WTC11 (cell line): ENCODE measurements at regions of chr22 and their contacts with region 1.

Region 1: DNA sequence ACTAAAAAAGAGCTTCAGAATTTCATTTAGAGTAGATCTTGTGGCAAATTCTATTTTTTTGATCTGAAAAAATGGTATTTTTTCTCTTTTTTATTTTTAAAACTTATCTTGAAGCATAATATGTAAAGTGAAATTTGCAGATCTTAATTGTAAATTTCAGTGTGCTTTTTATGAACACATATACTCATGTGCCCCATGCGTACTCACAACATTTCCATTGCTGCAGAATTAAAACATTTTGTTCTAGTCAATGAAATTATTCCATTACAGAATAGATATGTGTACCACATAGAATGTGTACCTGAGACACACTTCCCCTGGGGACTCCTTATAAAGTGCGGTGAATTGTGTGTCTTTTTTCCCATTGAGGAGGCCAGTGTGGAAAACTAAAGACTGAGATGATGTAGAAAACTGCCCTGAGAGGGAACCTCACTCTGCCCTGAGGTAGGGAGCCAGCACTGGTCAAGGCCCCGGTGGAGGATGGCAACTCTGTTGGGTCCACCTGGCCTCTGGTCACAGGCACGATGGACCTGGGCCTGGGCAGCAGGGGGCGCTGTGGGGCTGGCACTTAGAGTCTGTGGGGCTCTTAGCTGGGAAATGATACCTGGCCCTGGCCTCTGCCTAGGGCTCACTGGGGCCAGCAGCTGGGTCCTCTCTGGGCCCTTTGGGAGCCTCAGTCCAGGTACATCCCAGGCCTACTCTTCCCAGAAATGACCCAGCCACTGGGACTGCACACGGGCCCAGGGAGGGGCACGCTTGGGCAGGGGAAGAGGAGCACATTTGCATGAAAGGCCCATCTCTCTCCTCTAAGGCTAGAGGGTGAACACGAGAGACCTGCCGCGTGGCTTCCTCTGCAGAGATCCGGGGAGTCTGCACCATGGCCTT is 77.9 kb upstream of the TOP3B start:
- DNase-seq: peak; percentile 93
- ATAC-seq: peak; percentile 97
- H3K4me3 Mint-ChIP-seq: no peak overlapping the region
- H3K27ac Mint-ChIP-seq: no peak overlapping the region
- H3K4me1 Mint-ChIP-seq: peaks cover 9% of the 10 kb centered on the region
- H3K27me3 Mint-ChIP-seq: peaks cover 100% of the 10 kb centered on the region
- CTCF ChIP-seq: peak; percentile 94

Region 2: GRCh38 chr22:21982338-21982965 is 78.0 kb before region 1 on chr22 and contains the start of gene TOP3B:
- CTCF ChIA-PET with region 1: interaction called, 25 read pairs
- POLR2A ChIA-PET with region 1: no interaction called
- DNase-seq: peak; percentile 79
- ATAC-seq: peak; percentile 72
- H3K4me3 Mint-ChIP-seq: peak within 1 kb of the TSS; percentile 87
- H3K27ac Mint-ChIP-seq: peak within 1 kb of the TSS; percentile 76
- H3K4me1 Mint-ChIP-seq: peaks cover 8% of the 10 kb centered on the region
- H3K27me3 Mint-ChIP-seq: peaks cover 28% of the 10 kb centered on the region
- CTCF ChIP-seq: no peak
- total RNA-seq, gene TOP3B: 52.5 to 68.6 TPM (median 52.7 TPM) in 3 replicates

Region 3: GRCh38 chr22:22043296-22044078 is 17.0 kb before region 1 on chr22:
- CTCF ChIA-PET with region 1: interaction called, 29 read pairs
- POLR2A ChIA-PET with region 1: no interaction called
- DNase-seq: no peak
- ATAC-seq: peak; percentile 16; the same call in 1 of the 2 replicates
- H3K4me3 Mint-ChIP-seq: no peak overlapping the region
- H3K27ac Mint-ChIP-seq: no peak overlapping the region
- H3K4me1 Mint-ChIP-seq: no peaks in the 10 kb centered on the region
- H3K27me3 Mint-ChIP-seq: peaks cover 94% of the 10 kb centered on the region
- CTCF ChIP-seq: no peak

Region 4: DNA sequence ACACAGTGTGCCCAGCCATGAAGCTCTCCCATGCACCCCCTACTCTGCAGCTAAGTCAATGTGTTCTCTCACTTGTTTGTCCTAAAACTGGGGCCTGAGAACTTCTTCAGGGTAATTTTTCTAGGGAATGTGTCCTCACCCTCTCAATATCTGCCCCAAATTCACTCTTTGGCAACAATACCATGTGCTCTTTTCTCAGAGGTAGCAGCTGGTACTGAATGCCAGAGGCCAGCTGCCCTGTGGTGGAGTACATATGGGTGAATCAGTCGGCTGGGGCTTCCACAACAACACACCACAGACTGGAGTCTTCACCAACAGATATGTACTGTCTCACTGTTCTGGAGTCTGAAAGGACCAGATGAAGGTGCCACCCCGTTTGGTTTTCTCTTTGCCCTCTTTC is 19.8 kb after region 1 on chr22:
- CTCF ChIA-PET with region 1: interaction called, 10 read pairs
- POLR2A ChIA-PET with region 1: no interaction called
- DNase-seq: no peak
- ATAC-seq: no peak
- H3K4me3 Mint-ChIP-seq: no peak overlapping the region
- H3K27ac Mint-ChIP-seq: no peak overlapping the region
- H3K4me1 Mint-ChIP-seq: no peaks in the 10 kb centered on the region
- H3K27me3 Mint-ChIP-seq: peaks cover 100% of the 10 kb centered on the region
- CTCF ChIP-seq: no peak

Region 5: DNA sequence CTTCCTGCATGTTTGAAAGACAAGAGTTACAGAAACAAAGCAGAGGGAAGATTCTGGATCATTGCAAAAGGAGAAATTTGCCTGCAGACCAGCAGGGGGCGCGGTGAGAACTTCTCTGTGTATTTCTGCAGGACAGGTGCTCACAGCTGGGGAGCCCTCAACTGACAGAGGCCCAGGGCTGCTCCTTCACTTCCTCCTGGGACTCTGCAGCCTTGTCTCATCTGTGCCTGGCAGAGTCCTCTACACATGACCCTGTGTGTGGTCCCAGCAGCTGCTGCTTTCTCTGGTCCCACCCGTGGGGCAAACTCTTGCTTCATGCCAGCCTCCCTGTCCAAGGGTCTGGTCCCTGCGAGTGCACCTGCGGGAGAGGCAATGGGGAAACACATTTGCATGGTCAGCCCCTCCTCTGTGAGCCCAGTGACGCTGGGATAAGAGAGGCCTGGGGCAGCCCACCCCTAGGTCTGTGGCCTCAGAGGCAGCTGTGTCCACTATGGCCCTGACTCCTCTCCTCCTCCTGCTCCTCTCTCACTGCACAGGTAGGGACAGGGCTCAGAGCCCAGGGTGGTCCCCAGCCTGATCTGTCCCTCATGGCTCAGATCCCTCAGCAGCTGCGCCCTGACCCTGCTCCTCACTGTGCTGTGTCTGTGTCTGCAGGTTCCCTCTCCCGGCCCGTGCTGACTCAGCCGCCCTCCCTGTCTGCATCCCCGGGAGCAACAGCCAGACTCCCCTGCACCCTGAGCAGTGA is 140.9 kb after region 1 on chr22:
- CTCF ChIA-PET with region 1: interaction called, 17 read pairs
- POLR2A ChIA-PET with region 1: no interaction called
- DNase-seq: peak; percentile 50
- ATAC-seq: peak; percentile 76
- H3K4me3 Mint-ChIP-seq: no peak overlapping the region
- H3K27ac Mint-ChIP-seq: no peak overlapping the region
- H3K4me1 Mint-ChIP-seq: peaks cover 4% of the 10 kb centered on the region
- H3K27me3 Mint-ChIP-seq: peaks cover 100% of the 10 kb centered on the region
- CTCF ChIP-seq: peak; percentile 44; the same call in 1 of the 2 replicates

Region 6: GRCh38 chr22:22371031-22371541 is 310.6 kb after region 1 on chr22:
- CTCF ChIA-PET with region 1: no interaction called
- POLR2A ChIA-PET with region 1: no interaction called
- DNase-seq: no peak
- ATAC-seq: peak; percentile 88
- H3K4me3 Mint-ChIP-seq: no peak overlapping the region
- H3K27ac Mint-ChIP-seq: no peak overlapping the region
- H3K4me1 Mint-ChIP-seq: no peaks in the 10 kb centered on the region
- H3K27me3 Mint-ChIP-seq: peaks cover 100% of the 10 kb centered on the region
- CTCF ChIP-seq: no peak